ENCODE measurements at regions of chr7 and their contacts with region 1.

Region 1: GRCh38 chr7:125695626-125696025 is 766.0 kb upstream of the POT1 start:
- DNase-seq: no peak
- H3K4me3 ChIP-seq: no peak overlapping the region
- H3K27ac ChIP-seq: no peak overlapping the region
- H3K4me1 ChIP-seq: no peaks in the 10 kb centered on the region
- H3K27me3 ChIP-seq: no peaks in the 10 kb centered on the region
- CTCF ChIP-seq: no peak

Region 2: DNA sequence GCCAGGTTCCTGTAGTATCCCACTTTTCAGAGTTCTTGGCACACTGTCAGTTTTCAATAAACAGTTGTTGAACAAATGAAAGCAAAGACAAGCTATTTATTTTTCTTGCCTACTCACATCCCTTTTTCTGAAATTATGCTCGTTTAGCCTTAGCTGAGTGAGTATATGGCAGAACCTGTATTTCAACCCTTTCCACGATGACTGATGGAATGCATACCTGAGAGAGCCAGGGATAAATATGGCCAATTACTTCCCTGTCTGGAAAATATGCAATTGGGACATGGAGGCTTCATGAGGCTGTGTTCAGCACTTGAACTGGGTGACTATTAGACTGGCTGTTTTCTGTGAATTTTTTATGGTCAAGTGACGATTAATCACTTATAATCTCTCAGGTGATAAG is 621.5 kb before region 1 on chr7:
- CTCF ChIA-PET with region 1: no interaction called
- POLR2A ChIA-PET with region 1: interaction called, 11 read pairs
- intact Hi-C with region 1: no loop called
- DNase-seq: peak; percentile 30 to 79
- H3K4me3 ChIP-seq: no peak overlapping the region
- H3K27ac ChIP-seq: 0 out of 2 replicates have a peak overlapping the region, but pooled peaks have one; percentile 36
- H3K4me1 ChIP-seq: peaks cover 14% of the 10 kb centered on the region; the same call in 1 of the 2 replicates
- H3K27me3 ChIP-seq: no peaks in the 10 kb centered on the region
- CTCF ChIP-seq: no peak

Measured in PC-9 (cell line).